ENCODE measurements at regions of chr5 and their contacts with region 1.

Region 1: DNA sequence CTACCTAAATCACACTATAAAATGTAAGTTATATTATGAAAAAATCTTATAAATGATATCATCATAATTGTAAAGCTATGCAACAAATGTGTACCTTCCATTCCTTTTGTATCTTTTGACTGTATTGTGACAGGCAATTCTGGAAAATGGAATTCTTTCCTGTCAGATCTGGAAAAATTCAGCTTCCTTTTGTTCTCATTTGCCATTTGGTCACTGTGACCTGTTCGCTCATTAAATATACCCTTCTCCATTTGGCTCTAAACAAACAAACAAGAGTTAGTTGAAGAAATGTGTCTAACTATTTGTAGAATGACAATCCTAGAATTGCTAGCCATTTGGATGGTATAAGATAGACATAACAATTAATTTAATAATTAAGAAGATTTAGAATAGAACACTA is 62.7 kb downstream of the CDKL3 start:
- DNase-seq: no peak
- ATAC-seq: no peak
- H3K4me3 ChIP-seq: no peak overlapping the region
- H3K27ac ChIP-seq: no peak overlapping the region
- H3K4me1 ChIP-seq: no peaks in the 10 kb centered on the region
- H3K27me3 ChIP-seq: no peaks in the 10 kb centered on the region
- CTCF ChIP-seq: no peak
- POLR2A ChIP-seq: no peak
- RAD21 ChIP-seq: no peak

Region 2: DNA sequence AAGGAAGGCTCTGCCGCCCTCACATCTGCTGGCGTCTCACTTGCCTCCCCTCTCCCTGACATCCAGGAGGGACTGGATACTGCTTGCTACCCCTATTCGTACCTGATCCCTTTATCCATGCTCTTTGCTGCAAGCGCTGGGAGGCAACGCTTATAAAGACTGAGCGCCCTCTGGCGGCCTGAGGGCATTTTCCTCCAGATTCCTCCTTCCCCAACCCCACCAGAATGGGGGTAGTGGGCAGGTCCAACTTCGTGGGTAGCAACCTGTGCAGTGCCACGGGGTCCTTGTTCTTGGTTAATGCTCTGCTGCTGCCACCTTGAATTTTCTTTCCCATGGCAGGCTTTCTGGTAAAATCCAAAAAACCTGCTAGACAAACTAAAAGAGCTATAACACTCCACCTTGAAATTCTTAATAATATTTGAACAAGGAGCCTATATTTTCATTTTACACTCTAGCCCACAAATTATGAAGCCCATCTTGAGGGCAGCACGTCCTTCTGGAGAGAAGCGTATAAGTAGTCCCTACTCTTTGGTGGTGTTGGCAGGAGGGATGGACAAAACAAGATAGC is 273.6 kb after region 1 on chr5:
- CTCF ChIA-PET with region 1: interaction called, 4 read pairs
- POLR2A ChIA-PET with region 1: no interaction called
- RAD21 ChIA-PET with region 1: no interaction called
- intact Hi-C with region 1: loop called (anchors 2 kb)
- DNase-seq: peak; percentile 54
- ATAC-seq: peak; percentile 83
- H3K4me3 ChIP-seq: no peak overlapping the region
- H3K27ac ChIP-seq: no peak overlapping the region
- H3K4me1 ChIP-seq: peaks cover 0 to 11% of the 10 kb centered on the region in 2 experiments; a peak in 2 of 4 replicates
- H3K27me3 ChIP-seq: no peaks in the 10 kb centered on the region
- CTCF ChIP-seq: peak; percentile 83 to 89 (median 84)
- POLR2A ChIP-seq: no peak
- RAD21 ChIP-seq: peak; percentile 93

Measured in HCT116 (cell line).